ENCODE measurements at regions of chr1 and their contacts with region 1.

Region 1: DNA sequence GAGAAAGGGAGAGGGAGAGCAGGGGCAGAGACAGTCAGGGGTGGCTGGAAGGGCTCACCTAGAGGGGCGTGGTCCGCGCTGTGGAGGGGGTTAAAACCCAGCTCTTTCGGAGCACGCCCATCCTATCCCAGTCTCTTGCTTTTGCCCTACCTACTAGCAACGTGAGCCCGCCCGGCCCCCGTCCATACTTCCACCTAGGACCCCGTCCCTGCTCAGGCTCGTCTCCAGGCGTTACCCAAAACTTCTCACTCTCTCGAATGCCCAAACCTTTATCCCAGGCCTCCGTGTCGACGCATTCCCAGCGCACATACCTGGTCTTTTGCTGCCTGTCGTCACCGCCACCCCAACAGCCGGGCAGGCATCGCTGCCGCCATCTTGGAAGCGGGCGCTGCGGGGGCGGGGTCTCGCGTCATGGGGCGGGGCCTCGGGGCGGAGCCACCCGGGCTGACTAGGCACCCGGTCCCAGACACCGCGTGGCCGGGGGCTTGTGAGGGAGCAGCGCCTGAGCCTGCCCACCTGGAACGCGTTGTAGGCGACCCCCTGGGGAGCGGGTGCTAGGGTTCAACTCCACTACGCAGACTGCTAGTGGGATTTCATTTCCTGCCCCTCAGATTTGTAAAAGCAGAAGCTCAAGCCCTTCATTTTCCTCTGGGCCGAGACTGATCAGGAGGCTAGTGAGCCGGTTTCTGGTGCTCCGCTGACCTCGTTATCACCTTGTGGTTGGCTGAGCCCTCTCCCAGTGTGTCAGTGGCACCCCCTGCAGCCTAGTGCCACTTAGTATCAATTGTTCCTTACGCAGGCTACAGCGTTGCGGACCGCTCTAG is at the start of gene B4GALT3:
- DNase-seq: peak; percentile 88 to 97 (median 90)
- ATAC-seq: peak; percentile 89
- H3K4me3 ChIP-seq: peak within 1 kb of the TSS; percentile 90 to 92
- H3K4me3 Mint-ChIP-seq: peak within 1 kb of the TSS; percentile 98
- H3K27ac ChIP-seq: peak within 1 kb of the TSS; percentile 80 to 87
- H3K27ac Mint-ChIP-seq: peak within 1 kb of the TSS; percentile 99
- H3K4me1 ChIP-seq: peaks cover 50% of the 10 kb centered on the region
- H3K4me1 Mint-ChIP-seq: peaks cover 75% of the 10 kb centered on the region
- H3K27me3 ChIP-seq: no peaks in the 10 kb centered on the region
- H3K27me3 Mint-ChIP-seq: no peaks in the 10 kb centered on the region
- CTCF ChIP-seq: no peak
- total RNA-seq, gene B4GALT3: 33.8 to 36.4 TPM

Region 2: DNA sequence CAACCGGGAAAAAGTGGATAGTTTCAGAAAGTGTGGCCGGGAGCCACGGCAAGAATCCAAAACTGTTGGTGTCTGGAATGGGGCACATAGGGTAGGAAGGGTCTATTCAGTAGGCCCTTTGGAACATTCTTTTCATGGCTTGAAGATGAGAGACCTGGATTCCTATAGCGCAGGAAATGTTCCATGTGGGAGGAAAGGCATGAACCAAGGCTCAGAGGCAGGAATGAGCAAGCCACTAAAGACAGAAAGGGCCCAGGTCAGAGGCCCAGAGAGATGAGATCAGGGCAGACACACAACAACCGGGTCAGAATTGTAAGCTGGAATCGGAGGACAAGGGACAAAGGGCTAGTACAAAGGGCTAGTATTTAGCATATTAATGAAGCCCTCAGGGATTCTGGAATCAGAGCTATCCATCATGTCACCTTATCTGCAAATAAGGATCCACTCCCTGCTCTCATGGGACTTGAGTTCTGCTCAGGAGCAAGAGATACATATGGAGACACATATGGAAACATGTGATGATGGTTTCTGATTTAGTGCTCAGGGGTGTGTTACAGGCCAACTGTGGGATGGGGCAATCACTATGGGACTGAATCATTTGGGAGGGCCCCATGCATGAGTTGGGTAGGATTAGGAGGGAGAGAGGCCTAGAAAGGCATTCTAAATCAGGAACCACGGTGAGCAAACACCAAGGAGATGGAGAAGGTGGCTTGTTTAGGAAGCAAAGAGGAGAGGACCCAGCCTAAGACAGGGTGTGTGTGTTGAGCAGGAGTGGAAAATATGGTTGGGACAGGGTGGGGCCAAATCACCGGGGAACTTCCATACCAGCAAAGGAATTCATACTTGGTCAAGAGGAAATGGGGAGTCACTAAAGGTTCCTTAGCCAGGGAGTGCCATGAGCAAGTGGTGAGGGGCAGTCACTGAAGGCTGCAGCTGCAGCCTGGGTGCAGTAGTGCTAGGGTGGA is 96.7 kb before region 1 on chr1:
- CTCF ChIA-PET with region 1: no interaction called
- POLR2A ChIA-PET with region 1: no interaction called
- intact Hi-C with region 1: no loop called
- DNase-seq: no peak
- ATAC-seq: no peak
- H3K4me3 ChIP-seq: no peak overlapping the region
- H3K4me3 Mint-ChIP-seq: no peak overlapping the region
- H3K27ac ChIP-seq: no peak overlapping the region
- H3K27ac Mint-ChIP-seq: no peak overlapping the region
- H3K4me1 ChIP-seq: no peaks in the 10 kb centered on the region
- H3K4me1 Mint-ChIP-seq: no peaks in the 10 kb centered on the region
- H3K27me3 ChIP-seq: no peaks in the 10 kb centered on the region
- H3K27me3 Mint-ChIP-seq: no peaks in the 10 kb centered on the region
- CTCF ChIP-seq: no peak

Region 3: GRCh38 chr1:161159087-161159912 is 18.0 kb before region 1 on chr1 and contains the start of gene USP21:
- CTCF ChIA-PET with region 1: interaction called, 25 read pairs
- POLR2A ChIA-PET with region 1: interaction called, 34 read pairs
- intact Hi-C with region 1: loop called in 1 of 2 experiments (anchors 1 kb)
- DNase-seq: peak; percentile 84 to 95 (median 93)
- ATAC-seq: peak; percentile 96
- H3K4me3 ChIP-seq: peak within 1 kb of the TSS; percentile 76 to 82
- H3K4me3 Mint-ChIP-seq: peak within 1 kb of the TSS; percentile 94
- H3K27ac ChIP-seq: peak within 1 kb of the TSS; percentile 72 to 82
- H3K27ac Mint-ChIP-seq: peak within 1 kb of the TSS; percentile 95
- H3K4me1 ChIP-seq: peaks cover 37% of the 10 kb centered on the region
- H3K4me1 Mint-ChIP-seq: peaks cover 58% of the 10 kb centered on the region
- H3K27me3 ChIP-seq: no peaks in the 10 kb centered on the region
- H3K27me3 Mint-ChIP-seq: no peaks in the 10 kb centered on the region
- CTCF ChIP-seq: no peak
- total RNA-seq, gene USP21: 34.8 to 38.1 TPM

Region 4: GRCh38 chr1:161192476-161193465 is 15.4 kb after region 1 on chr1:
- CTCF ChIA-PET with region 1: interaction called, 71 read pairs
- POLR2A ChIA-PET with region 1: interaction called, 6 read pairs
- intact Hi-C with region 1: loop called in 1 of 2 experiments (anchors 1 kb)
- DNase-seq: peak; percentile 39 to 85 (median 70)
- ATAC-seq: peak; percentile 98
- H3K4me3 ChIP-seq: no peak overlapping the region
- H3K4me3 Mint-ChIP-seq: no peak overlapping the region
- H3K27ac ChIP-seq: peak overlapping the region in 1 of 2 experiments; percentile 41
- H3K27ac Mint-ChIP-seq: peak overlapping the region; percentile 70
- H3K4me1 ChIP-seq: peaks cover 37% of the 10 kb centered on the region
- H3K4me1 Mint-ChIP-seq: peaks cover 40% of the 10 kb centered on the region
- H3K27me3 ChIP-seq: no peaks in the 10 kb centered on the region
- H3K27me3 Mint-ChIP-seq: no peaks in the 10 kb centered on the region
- CTCF ChIP-seq: peak; percentile 75

Region 5: GRCh38 chr1:161298116-161298515 is 120.8 kb after region 1 on chr1:
- CTCF ChIA-PET with region 1: no interaction called
- POLR2A ChIA-PET with region 1: no interaction called
- intact Hi-C with region 1: no loop called
- DNase-seq: no peak
- ATAC-seq: no peak
- H3K4me3 ChIP-seq: no peak overlapping the region
- H3K4me3 Mint-ChIP-seq: no peak overlapping the region
- H3K27ac ChIP-seq: no peak overlapping the region
- H3K27ac Mint-ChIP-seq: no peak overlapping the region
- H3K4me1 ChIP-seq: peaks cover under 1% of the 10 kb centered on the region
- H3K4me1 Mint-ChIP-seq: peaks cover 3% of the 10 kb centered on the region
- H3K27me3 ChIP-seq: no peaks in the 10 kb centered on the region
- H3K27me3 Mint-ChIP-seq: no peaks in the 10 kb centered on the region
- CTCF ChIP-seq: no peak

Region 6: DNA sequence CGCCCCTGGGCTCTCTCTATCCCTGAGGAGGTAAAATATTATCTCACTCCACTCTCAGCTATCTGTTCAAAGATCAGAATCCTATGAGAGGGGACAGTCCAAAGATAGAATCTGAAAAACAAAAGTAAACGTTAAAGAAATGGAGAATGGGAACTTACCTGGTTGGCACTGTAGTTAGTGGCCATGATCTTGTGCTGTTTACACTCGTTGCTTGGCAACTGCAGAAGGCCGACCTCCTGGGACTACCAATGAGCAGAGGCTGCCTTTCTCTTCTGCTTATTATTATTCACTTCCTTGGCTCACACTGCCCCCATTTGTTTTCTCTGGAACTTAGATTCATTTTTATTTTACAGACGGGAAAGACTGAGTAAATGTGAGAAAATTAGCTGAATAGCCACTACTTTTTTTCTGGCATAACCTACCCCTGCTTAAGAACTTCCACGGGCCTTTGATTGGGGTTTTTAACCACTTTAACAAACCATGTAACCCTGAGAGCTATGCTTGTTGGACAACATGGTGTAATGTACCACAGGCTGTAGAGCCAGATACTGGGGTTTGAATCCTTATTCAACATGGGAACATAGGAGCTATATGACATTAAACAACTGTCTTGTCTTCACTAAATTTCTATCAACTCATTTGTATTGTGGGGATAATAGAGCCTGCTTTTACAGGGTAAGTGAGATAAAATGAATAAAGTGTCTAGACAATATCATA is 190.5 kb after region 1 on chr1 and contains the start of gene CFAP126:
- CTCF ChIA-PET with region 1: no interaction called
- POLR2A ChIA-PET with region 1: no interaction called
- intact Hi-C with region 1: no loop called
- DNase-seq: peak in 6 of 9 experiments; percentile 20 to 87 (median 58)
- ATAC-seq: peak; percentile 100
- H3K4me3 ChIP-seq: no peak within 1 kb of the TSS
- H3K4me3 Mint-ChIP-seq: no peak within 1 kb of the TSS
- H3K27ac ChIP-seq: peak within 1 kb of the TSS; percentile 23 to 60
- H3K27ac Mint-ChIP-seq: peak within 1 kb of the TSS; percentile 46
- H3K4me1 ChIP-seq: peaks cover 5% of the 10 kb centered on the region
- H3K4me1 Mint-ChIP-seq: peaks cover 8% of the 10 kb centered on the region
- H3K27me3 ChIP-seq: no peaks in the 10 kb centered on the region
- H3K27me3 Mint-ChIP-seq: no peaks in the 10 kb centered on the region
- CTCF ChIP-seq: no peak
- total RNA-seq, gene CFAP126: not detected